ENCODE measurements at regions of chr20 and their contacts with region 1.

Region 1: DNA sequence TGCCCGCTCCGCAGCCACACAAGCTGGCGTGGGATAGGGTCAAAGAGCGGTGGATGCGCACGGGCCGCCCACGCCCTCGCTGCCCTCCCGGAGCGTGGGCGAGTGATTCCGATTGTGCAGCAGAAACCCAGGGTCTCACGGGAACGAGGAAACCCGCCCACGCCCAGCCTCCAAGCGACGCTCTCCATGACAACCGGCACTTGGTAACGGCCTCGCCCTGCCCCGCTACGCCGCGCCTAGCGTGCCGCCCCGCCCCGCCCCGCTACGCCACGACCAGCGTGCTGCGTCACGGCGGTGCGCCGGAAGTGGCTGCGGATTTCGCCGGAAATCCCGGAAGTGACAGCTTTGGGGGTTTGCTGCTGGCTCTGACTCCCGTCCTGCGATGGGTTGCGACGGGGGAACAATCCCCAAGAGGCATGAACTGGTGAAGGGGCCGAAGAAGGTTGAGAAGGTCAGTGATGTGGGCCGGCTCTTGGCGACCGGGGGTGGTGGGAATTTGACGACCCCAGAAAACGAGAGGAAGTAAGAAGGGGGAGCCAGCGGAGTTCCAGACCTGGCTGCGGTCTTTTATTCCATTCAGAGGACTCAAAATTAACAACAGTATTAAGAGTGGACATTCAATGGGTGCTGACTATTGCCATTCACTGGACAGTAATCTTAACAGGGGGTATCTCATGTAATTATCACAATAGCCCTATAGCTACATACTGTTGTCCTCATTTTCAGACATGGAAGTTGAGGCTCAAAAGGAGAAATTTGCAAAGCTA is at the start of gene RTF2:
- DNase-seq: peak; percentile 97
- ATAC-seq: peak; percentile 95
- H3K4me3 ChIP-seq: peak within 1 kb of the TSS; percentile 90 to 100 (median 95)
- H3K4me3 Mint-ChIP-seq: peak within 1 kb of the TSS; percentile 100
- H3K27ac ChIP-seq: peak within 1 kb of the TSS; percentile 90 to 94
- H3K27ac Mint-ChIP-seq: peak within 1 kb of the TSS; percentile 98
- H3K4me1 ChIP-seq: peaks cover 37 to 49% of the 10 kb centered on the region in 2 donors
- H3K4me1 Mint-ChIP-seq: peaks cover 49% of the 10 kb centered on the region
- H3K27me3 ChIP-seq: no peaks in the 10 kb centered on the region
- H3K27me3 Mint-ChIP-seq: no peaks in the 10 kb centered on the region
- CTCF ChIP-seq: no peak
- total RNA-seq, gene RTF2: 71.1 and 78.4 TPM in 2 replicates

Region 2: DNA sequence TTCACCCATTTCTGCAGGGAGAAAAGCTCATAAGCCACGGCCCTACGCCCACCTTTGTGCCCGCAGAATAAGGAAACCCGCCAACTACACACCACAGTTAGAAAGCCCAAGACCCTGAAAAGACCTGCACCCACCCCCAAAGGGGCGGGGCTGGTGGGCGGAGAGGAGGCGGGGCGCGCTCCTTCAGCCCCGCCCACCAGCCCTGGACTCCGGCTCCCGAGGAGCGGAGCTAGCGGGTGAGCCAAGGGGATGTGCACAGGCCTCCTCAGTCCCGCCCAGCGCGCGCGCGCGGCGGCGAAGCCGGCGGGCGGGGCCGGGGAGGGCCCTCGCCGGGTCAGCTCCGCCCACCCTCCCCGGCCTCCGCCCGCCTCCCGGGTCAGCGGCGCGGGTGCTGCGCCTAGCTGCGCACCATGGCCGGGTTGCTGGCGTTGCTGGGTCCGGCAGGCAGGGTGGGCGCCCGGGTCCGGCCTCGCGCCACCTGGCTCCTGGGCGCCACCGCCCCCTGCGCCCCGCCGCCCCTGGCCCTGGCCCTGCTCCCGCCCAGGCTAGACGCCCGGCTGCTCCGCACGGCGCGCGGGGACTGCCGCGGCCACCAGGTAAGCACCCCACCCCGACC is 109.8 kb before region 1 on chr20 and contains the start of gene FAM210B:
- CTCF ChIA-PET with region 1: no interaction called
- POLR2A ChIA-PET with region 1: no interaction called
- intact Hi-C with region 1: loop called (anchors 1 kb)
- DNase-seq: peak; percentile 85
- ATAC-seq: peak; percentile 99
- H3K4me3 ChIP-seq: peak within 1 kb of the TSS; percentile 44 to 91 (median 62)
- H3K4me3 Mint-ChIP-seq: peak within 1 kb of the TSS; percentile 89
- H3K27ac ChIP-seq: no peak within 1 kb of the TSS
- H3K27ac Mint-ChIP-seq: peak within 1 kb of the TSS; percentile 37
- H3K4me1 ChIP-seq: peaks cover 0 to 15% of the 10 kb centered on the region in 2 donors
- H3K4me1 Mint-ChIP-seq: peaks cover 14% of the 10 kb centered on the region
- H3K27me3 ChIP-seq: no peaks in the 10 kb centered on the region
- H3K27me3 Mint-ChIP-seq: no peaks in the 10 kb centered on the region
- CTCF ChIP-seq: no peak
- total RNA-seq, gene FAM210B: 10.5 and 13.6 TPM in 2 replicates

Region 3: GRCh38 chr20:56392282-56393137 is 76.0 kb before region 1 on chr20 and contains the start of gene CSTF1:
- CTCF ChIA-PET with region 1: interaction called, 15 read pairs
- POLR2A ChIA-PET with region 1: interaction called, 5 read pairs
- intact Hi-C with region 1: loop called (anchors 1 kb)
- DNase-seq: peak; percentile 100
- ATAC-seq: peak; percentile 90
- H3K4me3 ChIP-seq: peak within 1 kb of the TSS; percentile 60 to 98 (median 73)
- H3K4me3 Mint-ChIP-seq: no peak within 1 kb of the TSS
- H3K27ac ChIP-seq: peak within 1 kb of the TSS; percentile 84 to 90
- H3K27ac Mint-ChIP-seq: no peak within 1 kb of the TSS
- H3K4me1 ChIP-seq: peaks cover 16 to 21% of the 10 kb centered on the region in 2 donors
- H3K4me1 Mint-ChIP-seq: peaks cover 18% of the 10 kb centered on the region
- H3K27me3 ChIP-seq: no peaks in the 10 kb centered on the region
- H3K27me3 Mint-ChIP-seq: no peaks in the 10 kb centered on the region
- CTCF ChIP-seq: no peak
- total RNA-seq, gene CSTF1: 31.9 and 33.8 TPM in 2 replicates

Region 4: DNA sequence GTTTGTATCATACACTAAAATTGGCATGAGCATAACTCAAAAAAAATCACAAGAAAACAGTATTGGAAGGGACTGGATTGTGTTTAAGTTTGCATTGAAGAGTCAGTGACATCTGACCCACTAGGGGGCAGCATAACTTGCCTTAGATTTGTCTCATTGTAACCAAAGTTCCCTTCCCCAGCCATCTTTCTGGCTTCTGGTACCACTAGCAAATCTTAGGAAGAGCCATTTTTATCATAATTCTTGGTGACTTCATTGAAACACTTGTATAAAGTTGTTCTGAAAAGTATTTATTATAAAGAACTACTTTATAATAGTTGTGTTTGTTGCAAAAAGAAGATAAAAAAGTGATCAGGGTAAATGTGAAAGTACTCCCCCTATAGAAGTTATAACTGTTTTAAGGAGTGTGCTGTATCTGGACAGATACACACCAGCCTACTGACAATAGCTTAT is 68.4 kb before region 1 on chr20:
- CTCF ChIA-PET with region 1: interaction called, 15 read pairs
- POLR2A ChIA-PET with region 1: no interaction called
- intact Hi-C with region 1: loop called (anchors 1 kb)
- DNase-seq: peak; percentile 77
- ATAC-seq: peak; percentile 47
- H3K4me3 ChIP-seq: no peak overlapping the region
- H3K4me3 Mint-ChIP-seq: no peak overlapping the region
- H3K27ac ChIP-seq: no peak overlapping the region
- H3K27ac Mint-ChIP-seq: no peak overlapping the region
- H3K4me1 ChIP-seq: no peaks in the 10 kb centered on the region
- H3K4me1 Mint-ChIP-seq: peaks cover 6% of the 10 kb centered on the region
- H3K27me3 ChIP-seq: no peaks in the 10 kb centered on the region
- H3K27me3 Mint-ChIP-seq: no peaks in the 10 kb centered on the region
- CTCF ChIP-seq: peak; percentile 96

Region 5: GRCh38 chr20:56497326-56497725 is 28.8 kb after region 1 on chr20:
- CTCF ChIA-PET with region 1: no interaction called
- POLR2A ChIA-PET with region 1: no interaction called
- intact Hi-C with region 1: no loop called
- DNase-seq: no peak
- ATAC-seq: no peak
- H3K4me3 ChIP-seq: no peak overlapping the region
- H3K4me3 Mint-ChIP-seq: no peak overlapping the region
- H3K27ac ChIP-seq: no peak overlapping the region
- H3K27ac Mint-ChIP-seq: no peak overlapping the region
- H3K4me1 ChIP-seq: no peaks in the 10 kb centered on the region
- H3K4me1 Mint-ChIP-seq: no peaks in the 10 kb centered on the region
- H3K27me3 ChIP-seq: no peaks in the 10 kb centered on the region
- H3K27me3 Mint-ChIP-seq: no peaks in the 10 kb centered on the region
- CTCF ChIP-seq: no peak

Region 6: GRCh38 chr20:56513161-56514150 is 45.0 kb after region 1 on chr20:
- CTCF ChIA-PET with region 1: no interaction called
- POLR2A ChIA-PET with region 1: no interaction called
- intact Hi-C with region 1: no loop called
- DNase-seq: no peak
- ATAC-seq: no peak
- H3K4me3 ChIP-seq: no peak overlapping the region
- H3K4me3 Mint-ChIP-seq: no peak overlapping the region
- H3K27ac ChIP-seq: no peak overlapping the region
- H3K27ac Mint-ChIP-seq: no peak overlapping the region
- H3K4me1 ChIP-seq: no peaks in the 10 kb centered on the region
- H3K4me1 Mint-ChIP-seq: no peaks in the 10 kb centered on the region
- H3K27me3 ChIP-seq: no peaks in the 10 kb centered on the region
- H3K27me3 Mint-ChIP-seq: no peaks in the 10 kb centered on the region
- CTCF ChIP-seq: no peak

Region 7: GRCh38 chr20:56624786-56625681 is 156.5 kb after region 1 on chr20:
- CTCF ChIA-PET with region 1: no interaction called
- POLR2A ChIA-PET with region 1: no interaction called
- intact Hi-C with region 1: no loop called
- DNase-seq: no peak
- ATAC-seq: no peak
- H3K4me3 ChIP-seq: no peak overlapping the region
- H3K4me3 Mint-ChIP-seq: no peak overlapping the region
- H3K27ac ChIP-seq: no peak overlapping the region
- H3K27ac Mint-ChIP-seq: no peak overlapping the region
- H3K4me1 ChIP-seq: peaks cover 18 to 21% of the 10 kb centered on the region in 2 donors
- H3K4me1 Mint-ChIP-seq: peaks cover 9% of the 10 kb centered on the region
- H3K27me3 ChIP-seq: peaks cover 0 to 59% (median 28%) of the 10 kb centered on the region in 4 experiments
- H3K27me3 Mint-ChIP-seq: peaks cover 37% of the 10 kb centered on the region
- CTCF ChIP-seq: no peak

Region 8: GRCh38 chr20:56875046-56875551 is 406.6 kb after region 1 on chr20:
- CTCF ChIA-PET with region 1: no interaction called
- POLR2A ChIA-PET with region 1: no interaction called
- intact Hi-C with region 1: no loop called
- DNase-seq: no peak
- ATAC-seq: no peak
- H3K4me3 ChIP-seq: no peak overlapping the region
- H3K4me3 Mint-ChIP-seq: no peak overlapping the region
- H3K27ac ChIP-seq: no peak overlapping the region
- H3K27ac Mint-ChIP-seq: no peak overlapping the region
- H3K4me1 ChIP-seq: no peaks in the 10 kb centered on the region
- H3K4me1 Mint-ChIP-seq: no peaks in the 10 kb centered on the region
- H3K27me3 ChIP-seq: no peaks in the 10 kb centered on the region
- H3K27me3 Mint-ChIP-seq: no peaks in the 10 kb centered on the region
- CTCF ChIP-seq: no peak

Measured in B cell (primary cell).